Aorta (tissue), 5 donors: ENCODE measurements at regions of chr9 and their contacts with region 1.

Region 1: DNA sequence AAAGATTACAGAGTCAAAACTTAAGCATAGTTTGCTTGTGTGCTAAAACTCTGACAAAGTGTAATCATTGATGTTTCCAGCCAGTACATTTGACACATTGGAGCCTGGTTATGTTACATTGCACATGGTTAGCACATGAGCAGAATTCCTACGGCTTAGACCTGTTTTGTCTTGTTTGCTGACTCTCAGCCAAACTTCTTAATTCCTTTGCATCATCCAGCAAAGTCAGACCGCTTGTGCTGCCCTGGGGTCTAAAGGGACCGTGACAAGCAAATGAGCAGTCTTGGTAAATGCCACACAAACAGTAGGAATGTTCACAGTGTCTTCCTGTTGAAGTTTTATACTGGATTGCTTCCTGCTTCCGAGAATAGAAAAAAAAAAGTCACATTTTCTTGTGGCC is 72.0 kb upstream of the ENTREP1 start:
- DNase-seq: no peak
- ATAC-seq: no peak
- H3K4me3 ChIP-seq: no peak overlapping the region
- H3K27ac ChIP-seq: no peak overlapping the region
- H3K4me1 ChIP-seq: no peaks in the 10 kb centered on the region
- H3K27me3 ChIP-seq: no peaks in the 10 kb centered on the region

Region 2: DNA sequence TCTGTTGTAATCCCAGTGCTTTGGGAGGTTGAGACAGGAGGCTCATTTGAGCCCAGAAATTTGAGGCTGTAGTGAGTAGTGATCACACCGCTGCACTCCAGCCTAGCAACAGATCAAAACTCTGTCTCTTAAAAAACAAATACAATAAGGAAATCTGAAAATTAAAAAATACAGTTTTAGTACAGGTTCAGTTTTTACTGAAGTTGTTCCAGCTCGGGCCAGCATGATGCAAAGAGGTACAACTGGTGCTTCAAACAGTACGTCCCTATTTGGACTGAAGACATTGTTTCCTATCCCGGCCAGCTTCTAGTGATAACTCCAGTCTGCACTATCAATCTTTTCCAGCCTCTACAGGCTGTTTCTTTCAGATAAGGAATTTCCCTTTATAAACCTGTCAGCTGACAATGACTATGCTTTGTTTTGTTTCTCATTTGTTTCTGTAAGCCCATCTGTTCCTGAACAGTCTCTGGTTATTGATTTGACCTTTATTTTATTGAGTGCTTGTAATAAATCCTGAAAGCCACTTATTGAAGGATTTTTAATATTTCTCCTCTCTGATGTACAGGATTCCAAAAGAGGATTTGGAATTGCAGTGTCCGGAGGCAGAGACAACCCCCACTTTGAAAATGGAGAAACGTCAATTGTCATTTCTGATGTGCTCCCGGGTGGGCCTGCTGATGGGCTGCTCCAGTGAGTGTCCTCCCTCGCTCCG is 37.1 kb before region 1 on chr9:
- intact Hi-C with region 1: loop called in 1 of 2 experiments (anchors 5 kb)
- DNase-seq: no peak
- ATAC-seq: no peak
- H3K4me3 ChIP-seq: no peak overlapping the region
- H3K27ac ChIP-seq: no peak overlapping the region
- H3K4me1 ChIP-seq: peaks cover 0 to 5% of the 10 kb centered on the region in 2 donors
- H3K27me3 ChIP-seq: no peaks in the 10 kb centered on the region

Region 3: DNA sequence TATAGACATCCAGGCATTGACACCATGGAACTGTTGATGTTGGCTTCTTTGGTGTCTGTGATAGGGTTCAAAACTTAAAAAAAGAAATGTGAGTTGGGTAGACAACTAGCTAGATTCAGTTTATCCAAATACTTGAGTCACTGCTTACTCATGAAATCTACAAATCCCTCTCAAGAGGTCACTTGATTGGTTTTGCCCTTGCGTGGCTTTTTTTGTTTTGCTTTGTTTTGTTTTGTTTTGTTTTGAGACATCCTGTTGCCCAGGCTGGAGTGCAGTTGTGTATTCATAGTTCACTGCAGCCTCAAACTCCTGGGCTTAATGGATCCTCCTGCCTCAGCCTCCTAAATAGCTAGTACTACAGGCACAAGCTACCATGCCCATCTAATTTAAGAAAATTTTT is 61.5 kb after region 1 on chr9:
- intact Hi-C with region 1: no loop called
- DNase-seq: no peak
- ATAC-seq: no peak
- H3K4me3 ChIP-seq: no peak overlapping the region
- H3K27ac ChIP-seq: no peak overlapping the region
- H3K4me1 ChIP-seq: no peaks in the 10 kb centered on the region
- H3K27me3 ChIP-seq: no peaks in the 10 kb centered on the region

Region 4: DNA sequence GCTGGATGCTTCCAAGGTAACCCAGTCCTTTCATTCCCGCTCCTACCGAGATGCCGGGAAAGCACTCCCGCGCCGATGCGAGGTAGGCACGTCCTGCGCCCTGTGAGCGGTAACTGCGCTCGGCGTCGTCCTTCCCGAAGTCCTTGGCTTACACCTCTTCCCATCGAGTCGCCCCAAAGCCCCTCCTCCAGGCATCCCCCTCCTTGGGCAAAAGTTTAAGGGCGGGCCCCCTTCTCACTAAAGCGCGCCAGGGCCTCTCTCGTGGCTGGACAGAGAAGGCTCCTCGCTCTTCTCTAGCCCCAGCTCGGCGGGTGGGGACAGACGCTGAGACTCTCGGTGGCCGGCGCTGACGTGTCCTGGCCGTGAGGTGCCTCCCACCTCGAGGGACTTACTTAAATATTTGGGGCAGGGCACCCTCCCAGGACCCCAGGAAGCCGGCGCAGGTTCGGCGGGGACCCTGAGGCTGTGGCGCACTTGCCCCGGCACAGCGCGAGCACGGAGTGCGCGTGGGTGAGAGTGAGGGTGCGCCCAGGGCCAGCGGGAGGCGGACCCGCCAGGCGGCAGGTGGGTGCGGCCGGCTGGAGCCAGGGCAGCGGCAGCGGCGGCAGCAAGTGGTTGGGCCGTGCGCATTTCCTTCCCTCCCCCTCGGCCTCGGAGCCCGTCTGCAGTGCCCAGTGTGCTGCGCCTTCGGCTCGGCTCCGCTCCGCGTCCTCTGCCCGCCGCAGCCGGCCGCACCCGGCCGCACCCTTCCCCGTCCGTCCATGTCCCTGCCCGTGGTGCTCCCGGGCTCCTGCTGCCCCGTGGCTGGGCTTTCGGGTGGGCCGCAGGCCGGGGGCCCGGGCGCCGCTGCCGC is 71.7 kb after region 1 on chr9 and contains the start of gene ENTREP1:
- intact Hi-C with region 1: loop called in 1 of 2 experiments (anchors 2 kb)
- DNase-seq: peak; percentile 76 to 89
- ATAC-seq: peak; percentile 92
- H3K4me3 ChIP-seq: peak within 1 kb of the TSS; percentile 67 to 74
- H3K27ac ChIP-seq: no peak within 1 kb of the TSS
- H3K4me1 ChIP-seq: no peaks in the 10 kb centered on the region
- H3K27me3 ChIP-seq: no peaks in the 10 kb centered on the region
- total RNA-seq, gene ENTREP1: 2.8 to 5.7 TPM